Endothelial cell of umbilical vein (primary cell): ENCODE measurements at regions of chr6 and their contacts with region 1.

Region 1: DNA sequence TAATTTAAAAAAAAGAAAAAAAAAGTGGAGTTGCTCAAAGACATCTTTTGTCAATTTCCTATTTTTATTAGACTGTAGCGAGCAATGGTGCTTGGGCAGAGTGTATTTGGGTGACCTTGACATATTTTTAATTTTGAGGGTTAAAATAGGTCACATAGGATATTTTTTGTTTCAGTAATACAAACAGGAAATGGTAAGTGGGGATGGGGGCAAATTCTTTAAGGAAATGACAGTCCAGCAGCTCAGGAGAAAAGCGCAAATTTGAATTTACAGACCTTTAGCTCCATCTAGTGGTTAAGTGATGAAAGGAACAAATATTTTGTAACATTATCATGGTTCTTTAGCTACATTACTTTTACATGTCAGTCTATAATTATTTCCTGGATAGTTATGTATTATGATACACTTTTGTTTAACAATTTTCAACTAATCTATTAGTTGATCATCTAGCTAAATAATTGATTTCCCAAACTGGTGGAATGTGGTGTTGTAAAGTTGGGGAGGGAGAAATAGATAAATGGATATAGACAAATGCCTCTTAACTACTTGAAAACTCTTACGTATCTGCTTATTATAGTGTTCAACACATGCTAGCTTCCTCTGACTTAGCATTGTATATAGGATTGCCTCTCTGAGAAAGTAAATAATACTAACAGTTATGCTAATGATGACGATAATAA is 10.0 kb downstream of the CITED2 start:
- DNase-seq: peak; percentile 66
- H3K4me3 ChIP-seq: no peak overlapping the region
- H3K27ac ChIP-seq: no peak overlapping the region
- H3K4me1 ChIP-seq: peaks cover 18% of the 10 kb centered on the region
- H3K27me3 ChIP-seq: no peaks in the 10 kb centered on the region
- CTCF ChIP-seq: peak; percentile 19 to 43
- POLR2A ChIP-seq: no peak

Region 2: GRCh38 chr6:138115877-138116660 is 1248.4 kb before region 1 on chr6:
- CTCF ChIA-PET with region 1: interaction called, 24 read pairs
- POLR2A ChIA-PET with region 1: no interaction called
- dilution Hi-C with region 1: no loop called
- intact Hi-C with region 1: loop called (anchors 1 kb)
- DNase-seq: peak; percentile 71
- H3K4me3 ChIP-seq: no peak overlapping the region
- H3K27ac ChIP-seq: no peak overlapping the region
- H3K4me1 ChIP-seq: no peaks in the 10 kb centered on the region
- H3K27me3 ChIP-seq: peaks cover 5 to 8% of the 10 kb centered on the region in 2 experiments
- CTCF ChIP-seq: peak; percentile 42 to 44
- POLR2A ChIP-seq: no peak

Region 3: GRCh38 chr6:138692058-138692977 is 672.1 kb before region 1 on chr6:
- CTCF ChIA-PET with region 1: interaction called, 14 read pairs
- POLR2A ChIA-PET with region 1: no interaction called
- dilution Hi-C with region 1: no loop called
- intact Hi-C with region 1: loop called (anchors 1 kb)
- DNase-seq: peak; percentile 68
- H3K4me3 ChIP-seq: peak overlapping the region; percentile 74 to 90 (median 75)
- H3K27ac ChIP-seq: peak overlapping the region; percentile 46
- H3K4me1 ChIP-seq: peaks cover 25% of the 10 kb centered on the region
- H3K27me3 ChIP-seq: no peaks in the 10 kb centered on the region
- CTCF ChIP-seq: peak; percentile 82 to 93
- POLR2A ChIP-seq: no peak

Region 4: GRCh38 chr6:138923561-138923960 is 440.9 kb before region 1 on chr6:
- CTCF ChIA-PET with region 1: interaction called, 5 read pairs
- POLR2A ChIA-PET with region 1: no interaction called
- dilution Hi-C with region 1: no loop called
- intact Hi-C with region 1: loop called (anchors 10 kb)
- DNase-seq: no peak
- H3K4me3 ChIP-seq: no peak overlapping the region
- H3K27ac ChIP-seq: no peak overlapping the region
- H3K4me1 ChIP-seq: peaks cover 9% of the 10 kb centered on the region
- H3K27me3 ChIP-seq: no peaks in the 10 kb centered on the region
- CTCF ChIP-seq: no peak
- POLR2A ChIP-seq: no peak

Region 5: GRCh38 chr6:139117734-139118133 is 246.7 kb before region 1 on chr6:
- CTCF ChIA-PET with region 1: interaction called, 27 read pairs
- POLR2A ChIA-PET with region 1: no interaction called
- dilution Hi-C with region 1: no loop called
- intact Hi-C with region 1: loop called (anchors 2 kb)
- DNase-seq: no peak
- H3K4me3 ChIP-seq: no peak overlapping the region
- H3K27ac ChIP-seq: no peak overlapping the region
- H3K4me1 ChIP-seq: no peaks in the 10 kb centered on the region
- H3K27me3 ChIP-seq: peaks cover 6 to 17% of the 10 kb centered on the region in 2 experiments
- CTCF ChIP-seq: peak in 1 of 2 donors; percentile 10
- POLR2A ChIP-seq: no peak

Region 6: DNA sequence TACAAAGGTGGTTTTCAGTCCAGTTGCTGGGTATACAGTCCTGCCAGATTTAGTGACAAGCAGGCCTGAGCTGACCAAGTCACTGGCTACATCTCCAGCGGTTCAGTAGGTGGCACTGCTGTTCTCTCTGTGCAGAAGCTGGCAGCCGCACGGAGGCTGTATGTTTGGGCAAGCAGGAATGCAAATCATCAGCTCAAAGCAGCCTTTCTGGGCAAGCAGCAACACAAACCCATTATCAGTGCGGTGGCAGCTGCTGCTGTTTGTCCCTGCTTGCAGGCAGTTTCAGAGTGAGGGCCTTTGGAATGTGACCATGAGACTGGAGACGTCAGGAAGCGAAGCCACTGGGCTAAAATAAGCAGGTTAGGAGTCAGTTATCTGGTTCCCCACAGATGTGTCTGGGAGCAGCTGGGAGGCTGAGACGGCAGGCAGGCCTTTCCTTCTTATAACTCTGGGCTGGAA is 145.1 kb before region 1 on chr6:
- CTCF ChIA-PET with region 1: interaction called, 258 read pairs
- POLR2A ChIA-PET with region 1: interaction called, 3 read pairs
- dilution Hi-C with region 1: no loop called
- intact Hi-C with region 1: loop called (anchors 1 kb)
- DNase-seq: peak; percentile 83
- H3K4me3 ChIP-seq: no peak overlapping the region
- H3K27ac ChIP-seq: no peak overlapping the region
- H3K4me1 ChIP-seq: peaks cover 3% of the 10 kb centered on the region
- H3K27me3 ChIP-seq: no peaks in the 10 kb centered on the region
- CTCF ChIP-seq: peak; percentile 68 to 84
- POLR2A ChIP-seq: no peak

Region 7: GRCh38 chr6:139250296-139251044 is 114.0 kb before region 1 on chr6:
- CTCF ChIA-PET with region 1: interaction called, 14 read pairs
- POLR2A ChIA-PET with region 1: no interaction called
- dilution Hi-C with region 1: no loop called
- intact Hi-C with region 1: loop called (anchors 1 kb)
- DNase-seq: peak; percentile 60
- H3K4me3 ChIP-seq: no peak overlapping the region
- H3K27ac ChIP-seq: no peak overlapping the region
- H3K4me1 ChIP-seq: no peaks in the 10 kb centered on the region
- H3K27me3 ChIP-seq: no peaks in the 10 kb centered on the region
- CTCF ChIP-seq: peak; percentile 62 to 75
- POLR2A ChIP-seq: no peak

Region 8: DNA sequence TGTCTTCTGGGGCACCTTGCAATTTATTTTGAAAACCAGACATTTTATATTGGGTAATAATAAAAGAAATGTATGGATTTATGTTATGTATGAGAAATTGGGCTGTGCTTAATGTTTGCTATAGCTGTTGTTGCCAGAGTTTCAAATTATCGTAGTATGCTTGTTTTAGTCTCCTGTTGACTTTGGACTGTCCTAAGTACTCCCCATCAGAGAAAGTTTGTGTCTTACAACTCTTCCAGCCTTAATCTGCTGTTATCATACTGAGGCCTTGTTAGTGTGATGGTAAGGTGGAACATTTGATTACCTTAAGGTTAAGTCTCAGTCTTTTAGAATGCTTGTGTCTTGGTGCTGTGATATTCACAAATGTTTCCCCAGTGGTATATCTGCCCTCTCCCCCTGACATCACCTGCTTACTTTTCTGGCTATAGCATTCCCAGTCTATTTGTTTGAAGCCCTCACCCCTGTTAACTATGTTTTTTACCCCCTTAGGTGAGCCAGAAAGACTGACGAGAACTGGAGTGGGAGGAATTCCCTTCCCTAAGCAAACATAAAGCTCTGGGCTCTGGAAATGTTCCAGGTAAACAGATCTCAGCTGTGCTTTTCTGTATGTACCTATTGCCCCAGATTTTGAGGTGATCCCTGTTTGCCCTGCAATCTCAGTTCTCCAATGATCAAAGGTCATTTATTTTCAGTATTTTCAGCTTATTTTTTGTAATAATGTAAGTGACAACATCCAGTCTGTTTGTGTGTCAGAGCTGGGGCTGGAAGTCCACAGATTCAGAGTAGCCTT is 591.1 kb after region 1 on chr6:
- CTCF ChIA-PET with region 1: no interaction called
- POLR2A ChIA-PET with region 1: no interaction called
- dilution Hi-C with region 1: no loop called
- intact Hi-C with region 1: no loop called
- DNase-seq: no peak
- H3K4me3 ChIP-seq: no peak overlapping the region
- H3K27ac ChIP-seq: no peak overlapping the region
- H3K4me1 ChIP-seq: no peaks in the 10 kb centered on the region
- H3K27me3 ChIP-seq: no peaks in the 10 kb centered on the region
- CTCF ChIP-seq: no peak
- POLR2A ChIP-seq: no peak